A673 (cell line): ENCODE measurements at regions of chr1 and their contacts with region 1.

Region 1: DNA sequence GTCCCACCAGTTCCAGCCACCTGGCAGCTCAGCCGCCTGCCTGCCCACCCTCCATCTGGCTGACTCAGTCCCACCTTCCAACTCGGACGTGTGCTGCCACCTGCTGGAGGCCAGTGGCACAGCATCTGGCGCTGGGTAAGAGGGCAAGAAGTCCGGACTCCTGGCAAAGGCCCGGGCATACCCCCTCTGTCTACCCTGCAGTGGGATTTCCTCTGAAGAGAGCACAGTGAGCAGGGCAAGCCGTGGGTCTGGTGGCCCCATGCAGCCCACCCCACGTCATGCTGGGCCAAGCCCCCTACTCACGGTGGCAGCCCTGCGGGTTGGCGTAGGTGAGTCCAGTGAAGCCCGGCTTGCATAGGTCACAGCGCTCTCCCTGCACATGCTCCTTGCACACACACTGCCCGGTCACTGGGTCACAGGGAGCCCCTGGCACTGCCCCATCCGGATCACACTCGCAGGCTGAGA is 24.5 kb downstream of the LAMB3 start:
- DNase-seq: peak; percentile 91
- H3K4me3 ChIP-seq: no peak overlapping the region
- H3K27ac ChIP-seq: peak overlapping the region; percentile 87
- H3K4me1 ChIP-seq: peaks cover 48% of the 10 kb centered on the region
- H3K27me3 ChIP-seq: no peaks in the 10 kb centered on the region
- CTCF ChIP-seq: peak; percentile 99

Region 2: DNA sequence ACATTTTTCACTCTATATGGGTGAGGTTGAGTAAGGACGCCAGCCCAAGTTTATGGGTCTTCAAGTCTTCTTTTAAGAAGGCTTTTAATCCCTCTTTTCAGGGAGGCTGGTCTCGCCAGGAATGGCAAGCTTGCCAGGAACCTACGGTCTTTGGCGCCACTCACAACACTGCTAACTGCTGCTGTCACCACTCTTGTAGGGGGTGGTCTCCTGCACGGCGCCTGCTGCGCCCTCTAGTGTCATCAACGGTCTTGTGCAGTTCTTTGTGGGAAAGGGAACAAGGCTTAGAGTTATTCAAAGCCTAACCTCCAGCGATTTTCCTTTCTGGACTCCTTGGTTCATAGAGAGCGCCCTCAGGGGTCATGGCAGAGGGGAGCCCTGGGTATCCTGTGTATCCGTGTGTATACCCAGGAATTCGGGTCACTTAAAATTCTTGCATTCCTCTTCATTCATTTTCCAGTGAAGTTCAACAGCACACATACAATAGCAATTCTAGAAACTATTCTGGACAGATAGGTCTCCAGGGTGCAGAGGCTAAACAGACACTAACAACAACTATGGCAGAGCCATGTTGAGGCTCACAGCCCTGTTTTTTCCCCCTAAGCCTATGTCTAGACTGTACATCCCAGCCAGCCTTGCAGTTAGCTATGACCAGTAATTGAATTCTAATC is 437.0 kb before region 1 on chr1:
- CTCF ChIA-PET with region 1: no interaction called
- POLR2A ChIA-PET with region 1: no interaction called
- intact Hi-C with region 1: no loop called
- DNase-seq: peak; percentile 84
- H3K4me3 ChIP-seq: no peak overlapping the region
- H3K27ac ChIP-seq: no peak overlapping the region
- H3K4me1 ChIP-seq: no peaks in the 10 kb centered on the region
- H3K27me3 ChIP-seq: no peaks in the 10 kb centered on the region
- CTCF ChIP-seq: peak; percentile 95

Region 3: GRCh38 chr1:209565759-209566678 is 61.7 kb before region 1 on chr1:
- CTCF ChIA-PET with region 1: interaction called, 20 read pairs
- POLR2A ChIA-PET with region 1: no interaction called
- intact Hi-C with region 1: loop called (anchors 2 kb)
- DNase-seq: peak; percentile 92
- H3K4me3 ChIP-seq: no peak overlapping the region
- H3K27ac ChIP-seq: no peak overlapping the region
- H3K4me1 ChIP-seq: peaks cover 33% of the 10 kb centered on the region
- H3K27me3 ChIP-seq: no peaks in the 10 kb centered on the region
- CTCF ChIP-seq: peak; percentile 93

Region 4: GRCh38 chr1:209576798-209577197 is 51.0 kb before region 1 on chr1:
- CTCF ChIA-PET with region 1: interaction called, 10 read pairs
- POLR2A ChIA-PET with region 1: no interaction called
- intact Hi-C with region 1: loop called (anchors 2 kb)
- DNase-seq: peak; percentile 90
- H3K4me3 ChIP-seq: no peak overlapping the region
- H3K27ac ChIP-seq: no peak overlapping the region
- H3K4me1 ChIP-seq: peaks cover 24% of the 10 kb centered on the region
- H3K27me3 ChIP-seq: no peaks in the 10 kb centered on the region
- CTCF ChIP-seq: peak; percentile 98

Region 5: GRCh38 chr1:209692745-209693504 is 65.2 kb after region 1 on chr1:
- CTCF ChIA-PET with region 1: no interaction called
- POLR2A ChIA-PET with region 1: no interaction called
- intact Hi-C with region 1: loop called (anchors 1 kb)
- DNase-seq: peak; percentile 95
- H3K4me3 ChIP-seq: no peak overlapping the region
- H3K27ac ChIP-seq: peak overlapping the region; percentile 50
- H3K4me1 ChIP-seq: peaks cover 46% of the 10 kb centered on the region
- H3K27me3 ChIP-seq: no peaks in the 10 kb centered on the region
- CTCF ChIP-seq: peak; percentile 95

Region 6: DNA sequence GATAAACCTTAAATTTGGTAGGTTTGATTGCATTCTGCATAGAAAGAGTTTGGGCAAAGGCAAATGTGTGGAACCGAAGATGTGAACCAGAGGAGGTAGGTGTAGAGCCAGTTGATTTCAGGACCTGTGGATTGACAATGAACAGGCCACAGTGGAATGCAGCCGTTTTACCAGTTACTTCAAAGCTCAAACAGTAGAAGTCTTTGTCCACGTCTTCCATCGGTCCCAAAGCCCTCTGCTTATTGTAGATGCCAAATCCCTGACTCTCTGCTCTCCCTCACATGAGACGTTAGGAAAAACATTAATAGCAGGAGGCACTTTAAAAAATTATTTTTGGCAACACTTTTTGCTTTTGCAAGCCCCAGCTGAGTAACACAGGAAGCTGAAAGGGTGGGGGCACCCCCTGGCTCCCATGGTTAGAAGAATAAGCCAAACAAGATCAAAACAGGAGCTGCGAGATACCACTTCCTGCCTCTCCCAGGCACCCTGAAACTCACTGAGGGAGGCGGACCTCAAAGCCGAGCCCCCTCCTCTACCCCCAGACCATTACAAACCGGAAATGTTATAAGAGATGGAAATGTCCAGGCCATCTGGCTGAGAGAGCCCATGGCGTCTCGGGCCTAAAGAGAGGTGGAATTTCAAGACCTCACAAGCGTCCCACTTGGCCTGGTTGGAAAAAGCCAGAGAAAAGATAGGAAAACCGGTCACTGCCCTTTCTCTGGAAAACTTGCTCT is 141.6 kb after region 1 on chr1:
- CTCF ChIA-PET with region 1: no interaction called
- POLR2A ChIA-PET with region 1: no interaction called
- intact Hi-C with region 1: loop called (anchors 2 kb)
- DNase-seq: peak; percentile 91
- H3K4me3 ChIP-seq: peak overlapping the region; percentile 7
- H3K27ac ChIP-seq: peak overlapping the region; percentile 89
- H3K4me1 ChIP-seq: peaks cover 40% of the 10 kb centered on the region
- H3K27me3 ChIP-seq: no peaks in the 10 kb centered on the region
- CTCF ChIP-seq: no peak

Region 7: DNA sequence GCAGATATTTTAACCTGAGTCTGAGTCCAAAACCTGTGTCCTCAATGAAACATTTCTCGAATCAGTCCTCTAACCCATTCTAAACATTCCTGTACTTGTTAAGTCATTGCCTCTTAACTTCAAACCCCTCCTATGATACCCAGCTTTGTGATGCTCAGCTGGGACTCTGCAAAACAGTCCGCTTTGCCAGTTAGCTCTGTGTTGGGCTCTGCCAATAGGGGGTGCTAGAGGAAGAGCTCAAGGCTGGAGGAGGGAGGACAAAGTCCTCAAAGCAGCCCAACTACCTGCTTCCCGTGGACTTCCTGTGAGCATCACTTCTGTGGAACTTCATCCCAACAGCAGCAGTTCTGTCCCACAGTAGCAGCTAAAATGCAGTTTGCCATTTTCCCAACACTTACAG is 272.2 kb after region 1 on chr1:
- CTCF ChIA-PET with region 1: no interaction called
- POLR2A ChIA-PET with region 1: no interaction called
- intact Hi-C with region 1: loop called (anchors 5 kb)
- DNase-seq: peak; percentile 64
- H3K4me3 ChIP-seq: no peak overlapping the region
- H3K27ac ChIP-seq: no peak overlapping the region
- H3K4me1 ChIP-seq: peaks cover 20% of the 10 kb centered on the region
- H3K27me3 ChIP-seq: no peaks in the 10 kb centered on the region
- CTCF ChIP-seq: peak; percentile 76

Region 8: DNA sequence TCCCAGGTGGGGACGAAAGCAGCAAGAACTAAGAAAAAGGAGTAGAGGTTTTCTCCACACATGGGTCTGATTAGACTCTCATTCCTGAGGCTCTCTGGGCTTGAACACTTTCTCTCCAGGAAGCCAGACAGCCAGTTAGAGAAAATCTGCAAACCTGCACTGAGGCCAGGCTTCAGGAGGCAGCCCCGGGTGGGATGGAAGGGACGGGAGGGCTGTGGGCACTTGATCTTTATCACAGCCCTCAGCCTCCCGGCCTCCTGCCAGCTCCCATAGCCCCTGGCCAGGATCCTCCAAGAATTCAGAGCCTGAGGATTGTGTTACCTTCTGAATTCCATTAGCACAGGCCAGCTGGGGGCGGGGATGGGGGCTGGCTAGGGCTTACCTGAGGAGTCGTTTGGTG is 644.9 kb after region 1 on chr1:
- CTCF ChIA-PET with region 1: no interaction called
- POLR2A ChIA-PET with region 1: no interaction called
- intact Hi-C with region 1: no loop called
- DNase-seq: no peak
- H3K4me3 ChIP-seq: no peak overlapping the region
- H3K27ac ChIP-seq: no peak overlapping the region
- H3K4me1 ChIP-seq: no peaks in the 10 kb centered on the region
- H3K27me3 ChIP-seq: no peaks in the 10 kb centered on the region
- CTCF ChIP-seq: no peak